ENCODE measurements at regions of chr11 and their contacts with region 1.

Region 1: DNA sequence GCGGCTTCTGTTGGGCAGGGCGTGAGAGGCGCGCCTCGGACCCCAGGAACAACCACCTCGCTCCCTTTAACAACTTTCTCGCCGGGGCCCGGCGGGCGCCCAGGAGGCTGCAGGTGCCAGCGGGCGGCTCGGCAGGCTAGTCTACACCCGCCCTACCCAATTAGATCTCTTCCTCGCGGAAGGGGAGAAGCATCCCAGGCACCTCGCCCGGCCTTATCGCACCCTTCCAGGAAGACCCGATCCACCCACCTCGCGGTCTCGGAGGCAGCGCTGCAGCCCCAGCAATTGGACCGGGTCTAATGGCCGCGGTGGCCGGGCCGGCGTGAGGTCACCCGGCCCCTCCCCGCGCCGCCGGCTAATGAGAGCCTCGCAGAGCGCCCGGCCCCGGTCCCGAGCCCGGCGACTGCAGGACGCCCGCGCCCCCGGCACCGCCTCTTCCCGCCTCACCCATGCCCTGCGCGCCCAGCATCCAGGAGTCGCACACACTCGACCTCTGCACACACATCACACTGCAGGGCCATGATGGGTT is at the start of gene PLAAT3:
- DNase-seq: peak; percentile 84 to 92 (median 89)
- ATAC-seq: peak; percentile 81 to 95 (median 91)
- H3K4me3 ChIP-seq: peak within 1 kb of the TSS; percentile 52 to 98 (median 89)
- H3K27ac ChIP-seq: peak within 1 kb of the TSS; percentile 75 to 95 (median 90)
- H3K4me1 ChIP-seq: peaks cover 10 to 43% (median 37%) of the 10 kb centered on the region in 12 donors
- H3K27me3 ChIP-seq: no peaks in the 10 kb centered on the region
- CTCF ChIP-seq: peak in 1 of 12 donors; percentile 11
- POLR2A ChIP-seq: peak in 1 of 2 donors; percentile 88
- total RNA-seq, gene PLAAT3: 84.7 to 152 (median 126) TPM

Region 2: GRCh38 chr11:63536669-63537292 is 77.4 kb before region 1 on chr11 and contains the start of gene PLAAT4:
- intact Hi-C with region 1: loop called in 3 of 10 experiments (anchors 1 to 10 kb)
- DNase-seq: peak in 4 of 5 donors; percentile 28 to 40 (median 36)
- ATAC-seq: peak; percentile 49 to 71 (median 60)
- H3K4me3 ChIP-seq: peak within 1 kb of the TSS; percentile 6 to 76 (median 52)
- H3K27ac ChIP-seq: peak within 1 kb of the TSS; percentile 75 to 97 (median 88)
- H3K4me1 ChIP-seq: peaks cover 7 to 81% (median 21%) of the 10 kb centered on the region in 12 donors
- H3K27me3 ChIP-seq: no peaks in the 10 kb centered on the region
- CTCF ChIP-seq: no peak
- POLR2A ChIP-seq: no peak
- total RNA-seq, gene PLAAT4: 4.6 to 484 (median 8.0) TPM

Region 3: GRCh38 chr11:63573881-63574855 is 40.0 kb before region 1 on chr11:
- intact Hi-C with region 1: loop called in 4 of 10 experiments (anchors 2 to 5 kb)
- DNase-seq: peak in 4 of 5 donors; percentile 40 to 61 (median 51)
- ATAC-seq: peak; percentile 66 to 91 (median 78)
- H3K4me3 ChIP-seq: peak overlapping the region in 10 of 12 donors; percentile 1 to 46 (median 26)
- H3K27ac ChIP-seq: peak overlapping the region; percentile 45 to 87 (median 68)
- H3K4me1 ChIP-seq: peaks cover 3 to 25% (median 16%) of the 10 kb centered on the region in 12 donors
- H3K27me3 ChIP-seq: no peaks in the 10 kb centered on the region
- CTCF ChIP-seq: peak in 3 of 12 donors; percentile 18 to 36 (median 27)
- POLR2A ChIP-seq: no peak

Region 4: DNA sequence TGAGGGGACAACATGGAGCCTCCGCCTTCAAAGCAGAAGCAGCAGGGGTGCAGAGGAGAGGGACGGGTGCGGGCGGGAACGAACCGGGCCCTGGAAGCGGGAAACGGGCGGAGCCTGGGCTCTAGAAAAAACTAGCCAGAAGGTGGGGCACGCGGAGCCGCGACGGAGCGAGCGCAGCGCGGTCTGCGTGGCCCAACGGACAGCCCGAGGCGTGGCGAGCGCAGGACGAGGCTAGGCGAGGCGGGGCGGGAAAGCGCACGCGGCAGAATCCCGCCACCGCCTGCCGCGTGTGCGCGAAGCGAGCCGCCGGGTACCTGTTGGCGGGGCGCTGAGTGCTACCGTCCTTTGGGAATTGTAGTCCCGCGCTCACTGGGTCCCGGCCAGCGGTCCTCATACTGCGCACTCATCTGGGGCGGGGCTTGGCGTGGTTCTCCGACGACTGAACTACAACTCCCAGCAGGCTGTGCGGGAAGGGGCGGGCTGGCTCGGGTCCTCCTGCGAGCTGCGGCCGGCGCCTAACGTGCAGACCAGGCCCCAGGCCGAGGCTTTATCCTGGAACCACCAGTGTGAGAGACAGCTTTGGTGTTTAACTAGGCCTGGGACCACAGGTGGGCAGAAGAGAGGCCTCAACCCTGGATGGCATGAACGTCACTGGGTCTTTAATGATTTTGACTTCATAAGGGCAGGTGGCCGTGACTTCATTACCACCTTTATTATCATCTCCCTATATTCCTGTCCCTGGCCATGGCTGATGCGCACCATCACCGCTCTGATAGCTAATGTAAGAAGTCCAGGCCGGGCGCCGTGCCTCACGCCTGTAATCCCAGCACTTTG is 57.3 kb after region 1 on chr11 and contains the start of gene ATL3:
- intact Hi-C with region 1: loop called in 1 of 10 experiments (anchors 2 kb)
- DNase-seq: peak; percentile 98
- ATAC-seq: peak; percentile 96 to 98 (median 96)
- H3K4me3 ChIP-seq: peak within 1 kb of the TSS; percentile 66 to 99 (median 89)
- H3K27ac ChIP-seq: peak within 1 kb of the TSS; percentile 90 to 99 (median 98)
- H3K4me1 ChIP-seq: peaks cover 2 to 48% (median 36%) of the 10 kb centered on the region in 12 donors
- H3K27me3 ChIP-seq: no peaks in the 10 kb centered on the region
- CTCF ChIP-seq: peak in 5 of 12 donors; percentile 14 to 41 (median 24)
- POLR2A ChIP-seq: peak in 1 of 2 donors; percentile 71
- total RNA-seq, gene ATL3: 10.4 to 30.4 (median 13.8) TPM

Measured in heart left ventricle (tissue), 16 donors.